ENCODE measurements at regions of chr1 and their contacts with region 1.

Region 1: DNA sequence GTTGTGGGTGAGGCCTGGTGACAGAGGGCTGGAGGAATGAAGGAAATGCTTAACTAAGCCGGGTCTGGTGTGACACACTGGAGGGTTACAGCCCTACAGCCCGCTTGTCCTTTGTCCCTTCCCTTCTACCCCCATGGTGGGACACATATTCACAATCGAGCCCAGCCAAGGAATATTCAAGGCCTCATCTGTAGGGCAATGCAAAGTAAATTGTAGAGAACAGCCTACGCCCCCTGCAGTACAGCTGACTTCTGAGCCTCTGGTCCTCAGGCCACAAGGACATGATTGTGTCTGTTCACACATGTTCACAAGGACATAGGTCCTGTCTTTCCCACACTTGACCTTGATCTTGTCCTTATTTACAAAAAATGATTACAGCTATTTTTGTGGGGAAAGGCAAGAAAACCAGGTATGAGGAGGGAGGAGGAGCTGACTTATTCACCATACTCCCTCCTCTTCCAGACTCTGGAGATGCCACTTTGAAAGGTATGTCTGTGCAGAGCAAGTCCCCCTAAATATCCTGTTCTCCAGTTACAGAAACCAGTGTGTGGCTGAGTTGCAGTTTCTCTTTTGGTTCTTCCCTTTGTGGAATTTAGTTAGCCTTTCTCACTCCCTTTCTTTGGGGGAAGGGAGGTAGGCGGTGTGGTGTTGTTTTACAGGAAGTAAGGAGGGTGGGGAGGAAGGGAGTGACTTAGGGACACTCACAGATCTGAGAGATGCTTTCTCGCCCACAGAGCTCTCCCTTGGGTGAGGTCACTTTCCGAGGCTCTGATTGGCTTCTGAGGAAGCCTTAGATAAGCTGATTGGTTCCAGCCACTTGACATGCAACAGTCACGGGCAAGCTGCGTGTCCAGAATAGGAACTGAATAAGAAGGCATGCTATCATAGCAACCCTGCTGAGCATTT is 14.6 kb downstream of the POLR3GL start:
- H3K4me3 Mint-ChIP-seq: no peak overlapping the region
- H3K27ac Mint-ChIP-seq: no peak overlapping the region
- H3K4me1 Mint-ChIP-seq: no peaks in the 10 kb centered on the region
- H3K27me3 Mint-ChIP-seq: no peaks in the 10 kb centered on the region

Region 2: DNA sequence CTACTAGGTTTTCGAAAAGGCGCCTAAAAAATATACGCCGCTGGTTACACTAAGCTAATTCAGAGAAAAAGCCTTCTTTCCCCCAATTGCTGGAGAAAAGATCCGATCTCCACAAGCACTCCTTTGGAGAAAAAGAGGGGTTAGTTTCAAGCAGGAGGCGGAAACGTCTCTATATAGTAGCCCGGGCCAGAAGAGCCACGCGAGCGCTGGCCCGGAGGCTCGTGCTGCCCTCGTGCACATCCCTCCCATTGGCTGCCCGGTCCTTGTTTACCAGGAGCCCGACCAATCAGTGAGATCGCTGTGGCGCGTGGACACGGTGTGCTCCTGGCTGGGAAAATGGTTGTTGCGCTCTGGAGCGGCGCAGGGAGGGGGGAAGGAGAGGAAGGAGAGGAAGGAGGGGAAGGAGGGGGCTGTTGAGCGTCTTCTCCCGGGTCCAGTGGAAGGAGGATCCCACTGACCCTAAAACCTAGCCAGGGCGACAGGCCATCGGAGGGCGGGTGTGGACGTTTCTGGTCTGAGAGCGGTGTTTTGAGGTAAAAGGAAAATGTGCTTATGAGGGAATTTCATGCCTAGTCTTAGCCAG is 17.4 kb after region 1 on chr1 and contains the start of gene TXNIP:
- intact Hi-C with region 1: loop called (anchors 1 kb)
- H3K4me3 Mint-ChIP-seq: peak within 1 kb of the TSS; percentile 99
- H3K27ac Mint-ChIP-seq: peak within 1 kb of the TSS; percentile 95
- H3K4me1 Mint-ChIP-seq: peaks cover 43% of the 10 kb centered on the region
- H3K27me3 Mint-ChIP-seq: no peaks in the 10 kb centered on the region

Region 3: GRCh38 chr1:146007506-146008133 is 28.5 kb after region 1 on chr1:
- intact Hi-C with region 1: loop called (anchors 1 kb)
- H3K4me3 Mint-ChIP-seq: peak overlapping the region; percentile 17
- H3K27ac Mint-ChIP-seq: peak overlapping the region; percentile 81
- H3K4me1 Mint-ChIP-seq: peaks cover 47% of the 10 kb centered on the region
- H3K27me3 Mint-ChIP-seq: no peaks in the 10 kb centered on the region

Region 4: DNA sequence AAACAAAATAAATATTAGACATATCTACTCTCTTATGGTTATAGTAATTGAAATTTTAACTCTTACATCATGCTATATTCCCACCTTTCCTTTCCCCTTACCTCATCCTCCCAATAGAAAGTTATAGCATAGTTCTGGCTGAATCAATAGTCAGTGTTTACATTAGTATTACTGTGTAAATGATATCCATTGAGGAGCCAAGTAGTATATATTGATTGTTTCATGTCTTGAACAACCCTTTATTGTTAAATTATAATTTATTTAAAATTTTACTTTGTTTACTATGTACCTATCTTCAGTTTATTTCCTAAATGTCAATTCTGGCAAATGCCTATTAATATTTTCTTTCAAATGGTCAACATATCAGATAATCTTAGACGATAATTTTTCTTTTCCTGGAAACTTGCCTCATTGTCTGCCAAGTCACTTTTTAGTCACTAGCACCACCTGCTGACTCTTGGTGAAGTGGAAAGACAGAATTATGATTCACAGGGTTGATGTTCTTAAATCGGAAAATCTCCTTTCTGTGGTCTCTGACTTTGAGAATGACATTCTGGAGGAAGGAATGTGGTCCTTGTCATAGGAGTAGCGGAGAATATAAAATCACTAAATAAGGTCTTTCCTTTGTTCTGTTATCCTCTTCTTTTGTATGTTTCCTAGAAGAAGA is 33.8 kb after region 1 on chr1:
- intact Hi-C with region 1: loop called (anchors 1 kb)
- H3K4me3 Mint-ChIP-seq: no peak overlapping the region
- H3K27ac Mint-ChIP-seq: no peak overlapping the region
- H3K4me1 Mint-ChIP-seq: peaks cover 10% of the 10 kb centered on the region
- H3K27me3 Mint-ChIP-seq: peaks cover 18% of the 10 kb centered on the region

Measured in dendritic cell treated with granulocyte-macrophage colony-stimulating factor and Interleukin-4, amounts not matched to agents 40 ng/mL and 50 ng/mL, for 4 days (primary cell).